ENCODE measurements at regions of chr13 and their contacts with region 1.

Region 1: GRCh38 chr13:57624565-57625435 is 6.7 kb upstream of the PCDH17 start:
- DNase-seq: no peak
- ATAC-seq: 0 out of 2 replicates have a peak, but pooled peaks have one; percentile 78
- H3K4me3 ChIP-seq: no peak overlapping the region
- H3K27ac ChIP-seq: no peak overlapping the region
- H3K4me1 ChIP-seq: no peaks in the 10 kb centered on the region
- H3K27me3 ChIP-seq: peaks cover 3% of the 10 kb centered on the region; the same call in 1 of the 2 replicates
- CTCF ChIP-seq: peak; percentile 72

Region 2: GRCh38 chr13:59318320-59318930 is 1693.6 kb after region 1 on chr13:
- CTCF ChIA-PET with region 1: no interaction called
- POLR2A ChIA-PET with region 1: no interaction called
- in situ Hi-C with region 1: no loop called
- intact Hi-C with region 1: loop called (anchors 5 kb)
- DNase-seq: peak; percentile 18
- ATAC-seq: no peak
- H3K4me3 ChIP-seq: no peak overlapping the region
- H3K27ac ChIP-seq: no peak overlapping the region
- H3K4me1 ChIP-seq: no peaks in the 10 kb centered on the region
- H3K27me3 ChIP-seq: no peaks in the 10 kb centered on the region
- CTCF ChIP-seq: peak; percentile 72

Measured in Panc1 (cell line).